ENCODE measurements at regions of chr11 and their contacts with region 1.

Region 1: DNA sequence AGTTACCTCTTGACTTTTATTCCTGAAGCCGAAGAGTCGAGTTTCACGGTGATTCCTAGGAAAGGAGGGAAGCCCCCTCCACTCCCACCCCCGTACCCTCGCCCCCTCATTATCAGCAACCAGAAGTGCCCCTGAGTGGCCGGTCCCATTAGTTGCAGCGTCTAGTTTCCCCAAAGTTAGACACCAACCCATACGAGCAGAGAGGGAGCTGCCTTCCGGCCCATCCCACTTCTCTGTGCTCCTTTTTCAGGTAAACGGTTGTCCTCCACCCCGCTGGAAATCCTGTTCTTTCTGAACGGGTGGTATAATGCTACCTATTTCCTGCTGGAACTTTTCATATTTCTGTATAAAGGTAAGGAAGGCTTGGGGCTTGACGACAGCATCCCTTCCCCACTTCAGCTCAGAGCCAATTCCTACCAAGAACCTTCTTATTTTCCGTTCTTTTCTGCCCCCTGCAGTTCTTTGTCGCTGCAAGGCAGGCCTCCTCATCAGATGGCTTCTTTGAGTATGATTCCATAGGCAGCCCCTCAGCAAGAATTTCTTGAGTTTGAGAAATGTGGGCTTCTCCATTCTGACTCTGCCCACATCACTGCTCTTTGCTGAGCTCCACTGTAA is 701 bp downstream of the TMEM216 start:
- DNase-seq: peak; percentile 28 to 35
- ATAC-seq: peak; percentile 51 to 64; a peak in 5 of 6 replicates
- H3K4me3 ChIP-seq: peak overlapping the region; percentile 69
- H3K27ac ChIP-seq: peak overlapping the region; percentile 82 to 90
- H3K4me1 ChIP-seq: 0 out of 3 replicates have a peak, but pooled peaks cover 8% of the 10 kb centered on the region
- CTCF ChIP-seq: peak; percentile 32
- EP300 ChIP-seq: no peak
- POLR2A ChIP-seq: no peak
- RAD21 ChIP-seq: peak; percentile 41 to 49; a peak in 4 of 5 replicates

Region 2: DNA sequence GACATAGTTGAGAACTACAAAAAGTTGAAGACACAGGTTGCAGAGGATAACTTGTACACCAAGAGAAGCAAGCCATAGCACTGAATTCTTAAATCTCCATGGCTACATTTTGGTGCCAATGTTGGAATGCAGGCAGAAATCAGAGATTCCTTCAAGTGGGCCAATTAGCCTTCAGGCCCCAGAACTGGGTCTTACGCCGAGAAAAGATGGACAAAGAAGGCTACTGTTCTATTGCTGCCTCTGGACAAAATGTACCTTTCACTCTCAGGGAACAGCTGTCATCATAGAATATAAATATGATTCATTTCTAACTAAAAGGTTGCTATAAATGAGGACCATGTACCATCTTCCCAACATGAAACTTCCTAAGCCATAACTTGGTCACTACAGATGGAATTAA is 13.0 kb after region 1 on chr11:
- CTCF ChIA-PET with region 1: interaction called, 17 read pairs
- POLR2A ChIA-PET with region 1: interaction called, 13 read pairs
- DNase-seq: no peak
- ATAC-seq: no peak
- H3K4me3 ChIP-seq: no peak overlapping the region
- H3K27ac ChIP-seq: no peak overlapping the region
- H3K4me1 ChIP-seq: no peaks in the 10 kb centered on the region
- CTCF ChIP-seq: no peak
- EP300 ChIP-seq: no peak
- POLR2A ChIP-seq: no peak
- RAD21 ChIP-seq: no peak

Measured in A549 (cell line).